ENCODE measurements at regions of chr1 and their contacts with region 1.

Region 1: DNA sequence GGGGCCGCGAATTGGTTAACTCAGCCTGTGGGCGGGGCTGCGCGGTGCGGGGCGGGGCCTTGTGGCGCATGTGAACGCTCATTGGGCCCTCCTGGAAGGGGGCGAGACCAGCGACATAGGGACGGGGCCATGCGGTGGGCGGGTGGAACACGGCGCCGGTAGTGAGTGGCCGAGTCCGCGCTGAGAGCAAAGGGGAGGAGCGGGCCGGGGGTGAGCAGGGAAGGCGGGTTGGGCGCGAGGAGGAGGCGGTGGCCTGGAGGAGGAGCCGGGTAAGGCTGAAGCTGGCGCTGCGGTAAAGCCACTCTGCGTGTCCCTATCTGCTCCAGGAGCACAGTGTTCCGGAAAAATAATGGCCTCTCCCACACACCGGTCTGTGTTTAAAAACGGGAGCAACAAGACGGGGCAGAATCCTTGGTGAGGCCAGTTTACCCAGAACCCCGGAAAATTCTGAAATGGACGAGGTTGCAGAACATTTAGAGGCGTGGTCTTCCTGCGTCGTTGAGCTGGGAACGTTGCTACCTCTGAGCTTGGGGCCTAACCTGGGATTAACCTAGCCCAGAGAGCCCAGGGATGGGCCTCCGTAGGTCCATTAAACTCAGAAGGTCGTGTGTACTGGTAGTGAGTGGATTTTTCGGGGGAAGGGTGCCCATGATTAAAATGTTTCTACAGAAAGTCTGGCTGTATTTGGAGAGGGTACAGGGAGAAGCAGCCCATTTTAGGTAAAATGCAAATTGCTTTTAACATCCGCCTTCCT is 533 bp upstream of the CTNNBIP1 start:
- DNase-seq: peak; percentile 99 to 100 (median 100)
- ATAC-seq: peak; percentile 88
- H3K4me3 ChIP-seq: peak overlapping the region; percentile 88 to 89
- H3K4me3 Mint-ChIP-seq: peak overlapping the region; percentile 95
- H3K27ac ChIP-seq: peak overlapping the region; percentile 79 to 87
- H3K27ac Mint-ChIP-seq: peak overlapping the region; percentile 97
- H3K4me1 ChIP-seq: peaks cover 17% of the 10 kb centered on the region
- H3K4me1 Mint-ChIP-seq: peaks cover 28% of the 10 kb centered on the region
- H3K27me3 ChIP-seq: no peaks in the 10 kb centered on the region
- H3K27me3 Mint-ChIP-seq: no peaks in the 10 kb centered on the region
- CTCF ChIP-seq: no peak

Region 2: GRCh38 chr1:9041116-9041779 is 869.4 kb before region 1 on chr1:
- CTCF ChIA-PET with region 1: no interaction called
- POLR2A ChIA-PET with region 1: no interaction called
- intact Hi-C with region 1: no loop called
- DNase-seq: no peak
- ATAC-seq: no peak
- H3K4me3 ChIP-seq: no peak overlapping the region
- H3K4me3 Mint-ChIP-seq: no peak overlapping the region
- H3K27ac ChIP-seq: no peak overlapping the region
- H3K27ac Mint-ChIP-seq: no peak overlapping the region
- H3K4me1 ChIP-seq: no peaks in the 10 kb centered on the region
- H3K4me1 Mint-ChIP-seq: no peaks in the 10 kb centered on the region
- H3K27me3 ChIP-seq: no peaks in the 10 kb centered on the region
- H3K27me3 Mint-ChIP-seq: no peaks in the 10 kb centered on the region
- CTCF ChIP-seq: no peak

Region 3: GRCh38 chr1:9234223-9235095 is 676.1 kb before region 1 on chr1 and contains the start of gene H6PD:
- CTCF ChIA-PET with region 1: no interaction called
- POLR2A ChIA-PET with region 1: no interaction called
- intact Hi-C with region 1: loop called in 1 of 2 experiments (anchors 10 kb)
- DNase-seq: peak; percentile 43 to 89 (median 71)
- ATAC-seq: peak; percentile 76
- H3K4me3 ChIP-seq: peak within 1 kb of the TSS; percentile 71 to 84
- H3K4me3 Mint-ChIP-seq: peak within 1 kb of the TSS; percentile 96
- H3K27ac ChIP-seq: peak within 1 kb of the TSS; percentile 64 to 84
- H3K27ac Mint-ChIP-seq: peak within 1 kb of the TSS; percentile 96
- H3K4me1 ChIP-seq: peaks cover 26% of the 10 kb centered on the region
- H3K4me1 Mint-ChIP-seq: peaks cover 38% of the 10 kb centered on the region
- H3K27me3 ChIP-seq: no peaks in the 10 kb centered on the region
- H3K27me3 Mint-ChIP-seq: no peaks in the 10 kb centered on the region
- CTCF ChIP-seq: peak; percentile 22
- total RNA-seq, gene H6PD: 11.1 to 11.2 TPM

Region 4: GRCh38 chr1:9629445-9630201 is 281.0 kb before region 1 on chr1:
- CTCF ChIA-PET with region 1: no interaction called
- POLR2A ChIA-PET with region 1: no interaction called
- intact Hi-C with region 1: loop called in 1 of 2 experiments (anchors 1 kb)
- DNase-seq: peak; percentile 50 to 92 (median 83)
- ATAC-seq: peak; percentile 42
- H3K4me3 ChIP-seq: peak overlapping the region; percentile 85 to 98
- H3K4me3 Mint-ChIP-seq: peak overlapping the region; percentile 98
- H3K27ac ChIP-seq: peak overlapping the region; percentile 79 to 81
- H3K27ac Mint-ChIP-seq: peak overlapping the region; percentile 98
- H3K4me1 ChIP-seq: peaks cover 66% of the 10 kb centered on the region
- H3K4me1 Mint-ChIP-seq: peaks cover 68% of the 10 kb centered on the region
- H3K27me3 ChIP-seq: no peaks in the 10 kb centered on the region
- H3K27me3 Mint-ChIP-seq: no peaks in the 10 kb centered on the region
- CTCF ChIP-seq: no peak

Region 5: GRCh38 chr1:9823943-9824701 is 86.5 kb before region 1 on chr1 and contains the start of gene CLSTN1:
- CTCF ChIA-PET with region 1: no interaction called
- POLR2A ChIA-PET with region 1: no interaction called
- intact Hi-C with region 1: loop called (anchors 1 to 2 kb)
- DNase-seq: peak; percentile 76 to 93 (median 91)
- ATAC-seq: peak; percentile 72
- H3K4me3 ChIP-seq: peak within 1 kb of the TSS; percentile 58 to 72
- H3K4me3 Mint-ChIP-seq: peak within 1 kb of the TSS; percentile 96
- H3K27ac ChIP-seq: peak within 1 kb of the TSS; percentile 37 to 76
- H3K27ac Mint-ChIP-seq: peak within 1 kb of the TSS; percentile 89
- H3K4me1 ChIP-seq: peaks cover 36% of the 10 kb centered on the region
- H3K4me1 Mint-ChIP-seq: peaks cover 43% of the 10 kb centered on the region
- H3K27me3 ChIP-seq: no peaks in the 10 kb centered on the region
- H3K27me3 Mint-ChIP-seq: no peaks in the 10 kb centered on the region
- CTCF ChIP-seq: no peak
- total RNA-seq, gene CLSTN1: 50.0 to 51.1 TPM

Region 6: GRCh38 chr1:10032590-10033358 is 122.2 kb after region 1 on chr1 and contains the start of gene UBE4B:
- CTCF ChIA-PET with region 1: no interaction called
- POLR2A ChIA-PET with region 1: no interaction called
- intact Hi-C with region 1: loop called (anchors 1 kb)
- DNase-seq: peak; percentile 96 to 100 (median 99)
- ATAC-seq: peak; percentile 94
- H3K4me3 ChIP-seq: peak within 1 kb of the TSS; percentile 95 to 98
- H3K4me3 Mint-ChIP-seq: peak within 1 kb of the TSS; percentile 97
- H3K27ac ChIP-seq: peak within 1 kb of the TSS; percentile 93 to 94
- H3K27ac Mint-ChIP-seq: peak within 1 kb of the TSS; percentile 98
- H3K4me1 ChIP-seq: peaks cover 18% of the 10 kb centered on the region
- H3K4me1 Mint-ChIP-seq: peaks cover 23% of the 10 kb centered on the region
- H3K27me3 ChIP-seq: no peaks in the 10 kb centered on the region
- H3K27me3 Mint-ChIP-seq: no peaks in the 10 kb centered on the region
- CTCF ChIP-seq: peak; percentile 89
- total RNA-seq, gene UBE4B: 25.8 to 32.2 TPM

Region 7: DNA sequence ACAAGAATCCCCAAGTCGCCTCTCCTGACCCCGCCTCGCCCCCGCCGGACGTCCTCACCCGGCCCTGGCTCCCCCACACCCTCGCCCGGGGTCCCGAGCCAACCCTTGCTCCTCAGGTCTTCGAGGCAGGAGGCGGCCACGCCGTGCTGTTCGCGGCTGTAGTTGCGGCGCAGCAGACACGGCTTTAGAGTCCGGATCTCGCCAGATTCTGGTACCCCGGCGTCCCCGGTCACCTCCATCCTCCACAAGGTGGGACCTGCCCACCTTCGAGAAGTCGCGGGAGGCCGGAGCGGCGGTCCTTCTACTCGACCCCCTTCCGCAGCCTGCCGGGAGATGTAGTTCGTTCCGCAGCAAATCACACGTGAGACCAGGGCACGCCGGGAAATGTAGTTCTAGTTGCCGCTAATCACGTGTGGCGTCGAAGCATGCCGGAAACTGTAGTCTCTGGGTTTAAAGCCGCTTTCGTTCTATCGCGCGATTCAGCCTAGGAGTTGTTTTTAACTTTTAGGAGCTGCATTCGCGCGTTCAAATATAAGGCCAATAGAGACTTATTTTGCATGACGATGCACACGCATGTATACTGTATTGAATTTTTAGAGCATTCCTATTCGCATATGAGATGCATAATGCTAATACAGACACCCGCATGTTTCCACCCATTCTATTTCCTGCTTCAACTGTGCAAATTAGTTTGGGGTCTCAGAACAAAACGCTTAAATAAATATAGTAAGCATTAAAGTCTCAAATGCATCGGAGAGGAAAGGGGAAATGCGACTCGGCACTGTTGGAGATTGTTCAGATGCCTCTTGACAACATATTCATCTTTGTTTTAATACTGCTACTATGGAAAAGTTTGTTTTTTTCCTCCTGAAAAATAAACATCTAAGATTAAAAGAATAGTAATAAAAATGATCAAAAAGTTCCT is 561.9 kb after region 1 on chr1 and contains the start of gene DFFA:
- CTCF ChIA-PET with region 1: no interaction called
- POLR2A ChIA-PET with region 1: no interaction called
- intact Hi-C with region 1: loop called in 1 of 2 experiments (anchors 1 kb)
- DNase-seq: peak; percentile 83 to 96 (median 91)
- ATAC-seq: peak; percentile 75
- H3K4me3 ChIP-seq: peak within 1 kb of the TSS; percentile 62 to 81
- H3K4me3 Mint-ChIP-seq: peak within 1 kb of the TSS; percentile 92
- H3K27ac ChIP-seq: peak within 1 kb of the TSS; percentile 39 to 66
- H3K27ac Mint-ChIP-seq: peak within 1 kb of the TSS; percentile 90
- H3K4me1 ChIP-seq: peaks cover 34% of the 10 kb centered on the region
- H3K4me1 Mint-ChIP-seq: peaks cover 47% of the 10 kb centered on the region
- H3K27me3 ChIP-seq: no peaks in the 10 kb centered on the region
- H3K27me3 Mint-ChIP-seq: no peaks in the 10 kb centered on the region
- CTCF ChIP-seq: no peak
- total RNA-seq, gene DFFA: 10.0 to 10.4 TPM

Measured in CD8-positive, alpha-beta T cell (primary cell).